Stomach (tissue), 19 donors: ENCODE measurements at regions of chr1 and their contacts with region 1.

Region 1: GRCh38 chr1:117059678-117060440 is at the start of gene TTF2:
- DNase-seq: peak; percentile 93 to 99
- H3K4me3 ChIP-seq: peak within 1 kb of the TSS; percentile 69 to 84 (median 80)
- H3K27ac ChIP-seq: peak within 1 kb of the TSS; percentile 85 to 88 (median 86)
- H3K4me1 ChIP-seq: peaks cover 0 to 31% (median 17%) of the 10 kb centered on the region in 4 donors
- H3K27me3 ChIP-seq: no peaks in the 10 kb centered on the region
- CTCF ChIP-seq: peak in 4 of 7 experiments; percentile 10 to 48 (median 30)
- EP300 ChIP-seq: no peak
- POLR2A ChIP-seq: peak in 1 of 4 donors; percentile 38
- total RNA-seq, gene TTF2: 6.2 to 58.7 (median 27.0) TPM

Region 2: GRCh38 chr1:116570358-116571200 is 489.3 kb before region 1 on chr1 and contains the start of gene CD58:
- intact Hi-C with region 1: loop called (anchors 10 kb)
- DNase-seq: peak; percentile 91 to 96
- H3K4me3 ChIP-seq: peak within 1 kb of the TSS; percentile 61 to 80 (median 69)
- H3K27ac ChIP-seq: peak within 1 kb of the TSS; percentile 94 to 98 (median 97)
- H3K4me1 ChIP-seq: peaks cover 19 to 70% (median 36%) of the 10 kb centered on the region in 4 donors
- H3K27me3 ChIP-seq: no peaks in the 10 kb centered on the region
- CTCF ChIP-seq: peak in 4 of 7 experiments; percentile 27 to 78 (median 72)
- EP300 ChIP-seq: no peak
- POLR2A ChIP-seq: peak in 1 of 4 donors; percentile 34
- total RNA-seq, gene CD58: 1.2 to 48.8 (median 7.6) TPM